ENCODE measurements at regions of chr3 and their contacts with region 1.

Region 1: GRCh38 chr3:69739204-69740102 is at the start of gene MITF:
- DNase-seq: peak; percentile 86 to 90
- H3K4me3 ChIP-seq: peak within 1 kb of the TSS; percentile 60
- H3K4me3 Mint-ChIP-seq: peak within 1 kb of the TSS; percentile 81
- H3K27ac Mint-ChIP-seq: no peak within 1 kb of the TSS
- H3K4me1 ChIP-seq: peaks cover 6% of the 10 kb centered on the region; the same call in 1 of the 2 replicates
- H3K4me1 Mint-ChIP-seq: peaks cover 10% of the 10 kb centered on the region
- H3K27me3 ChIP-seq: no peaks in the 10 kb centered on the region; the same call in 1 of the 2 replicates
- H3K27me3 Mint-ChIP-seq: peaks cover 6% of the 10 kb centered on the region
- CTCF ChIP-seq: no peak
- total RNA-seq, gene MITF: 3.9 and 4.3 TPM in 2 replicates

Region 2: DNA sequence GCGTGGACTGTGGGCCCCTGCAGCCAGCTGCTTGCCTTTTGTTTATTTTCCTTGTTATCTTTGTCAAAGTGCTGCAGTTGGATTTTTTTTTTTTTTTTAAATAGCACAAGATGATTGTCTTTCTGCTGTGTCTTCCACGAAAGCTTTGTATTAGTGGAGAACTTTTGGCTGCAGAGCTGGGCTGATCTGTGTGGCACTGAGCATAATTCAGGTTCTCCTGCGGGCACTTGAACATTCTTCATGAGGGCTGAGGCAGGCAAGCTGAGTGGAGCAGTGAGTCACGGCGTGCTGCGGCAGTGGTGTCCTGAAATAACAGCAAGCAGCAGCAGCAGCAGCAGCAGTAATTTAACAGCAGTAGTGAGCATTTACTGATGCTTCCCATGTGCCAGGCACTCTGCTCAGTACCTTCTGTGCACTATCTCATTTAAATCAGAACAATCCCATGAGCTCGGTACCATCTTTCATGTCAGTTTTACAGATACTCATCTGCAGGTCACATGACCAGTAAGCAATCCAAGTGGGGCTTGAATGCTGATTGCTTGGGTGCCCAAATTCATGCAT is 45.6 kb after region 1 on chr3:
- CTCF ChIA-PET with region 1: no interaction called
- POLR2A ChIA-PET with region 1: no interaction called
- intact Hi-C with region 1: loop called (anchors 10 kb)
- DNase-seq: no peak
- H3K4me3 ChIP-seq: no peak overlapping the region
- H3K4me3 Mint-ChIP-seq: no peak overlapping the region
- H3K27ac Mint-ChIP-seq: no peak overlapping the region
- H3K4me1 ChIP-seq: peaks cover 24% of the 10 kb centered on the region
- H3K4me1 Mint-ChIP-seq: peaks cover 14% of the 10 kb centered on the region
- H3K27me3 ChIP-seq: no peaks in the 10 kb centered on the region
- H3K27me3 Mint-ChIP-seq: no peaks in the 10 kb centered on the region
- CTCF ChIP-seq: no peak

Region 3: DNA sequence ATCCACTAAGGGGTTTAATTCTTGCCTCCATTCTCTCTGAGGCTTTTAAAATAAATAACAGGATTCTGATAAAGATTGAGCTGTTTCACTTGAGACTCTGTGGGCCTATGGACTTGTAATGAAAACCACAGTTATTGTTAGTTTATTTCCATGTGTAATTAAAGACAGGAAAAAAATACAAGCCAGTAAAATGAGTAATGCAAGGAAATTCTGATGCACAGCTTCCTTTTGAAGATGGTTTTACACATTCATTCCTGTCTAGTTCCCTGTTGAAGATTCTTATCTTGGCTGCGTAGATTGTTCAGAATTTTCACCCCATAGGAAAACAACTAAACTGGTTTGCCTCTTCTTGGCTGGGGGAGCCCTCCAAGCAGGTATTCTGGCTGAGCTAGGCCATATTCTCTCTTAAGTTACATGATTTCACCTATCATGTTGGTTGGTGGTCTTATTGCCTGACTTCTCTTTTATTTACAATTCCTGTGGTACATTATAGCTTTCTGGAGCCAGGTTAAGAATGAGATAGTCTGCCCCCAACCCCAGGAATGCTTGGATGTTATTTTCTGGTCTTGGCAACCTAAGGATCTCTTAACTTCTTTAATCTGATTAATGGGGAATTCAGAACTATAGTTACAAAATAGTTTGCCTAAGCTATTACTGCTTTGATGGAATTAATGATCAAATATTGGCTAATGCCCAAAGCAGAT is 67.4 kb after region 1 on chr3:
- CTCF ChIA-PET with region 1: no interaction called
- POLR2A ChIA-PET with region 1: no interaction called
- intact Hi-C with region 1: no loop called
- DNase-seq: no peak
- H3K4me3 ChIP-seq: no peak overlapping the region
- H3K4me3 Mint-ChIP-seq: no peak overlapping the region
- H3K27ac Mint-ChIP-seq: no peak overlapping the region
- H3K4me1 ChIP-seq: no peaks in the 10 kb centered on the region; the same call in 1 of the 2 replicates
- H3K4me1 Mint-ChIP-seq: peaks cover 14% of the 10 kb centered on the region
- H3K27me3 ChIP-seq: no peaks in the 10 kb centered on the region
- H3K27me3 Mint-ChIP-seq: no peaks in the 10 kb centered on the region
- CTCF ChIP-seq: no peak

Measured in Caco-2 (cell line).